Activated CD8-positive, alpha-beta memory T cell treated with anti-CD3 and anti-CD28 coated beads, Interleukin-2, amount 10 ng/mL, durations not matched to agents 7 days and 5 days (primary cell): ENCODE measurements at regions of chr10 and their contacts with region 1.

Region 1: GRCh38 chr10:119596537-119597404 is at the start of gene TIAL1:
- DNase-seq: peak; percentile 98
- ATAC-seq: peak; percentile 91
- H3K4me3 Mint-ChIP-seq: peak within 1 kb of the TSS; percentile 90
- H3K27ac Mint-ChIP-seq: peak within 1 kb of the TSS; percentile 96
- H3K4me1 Mint-ChIP-seq: peaks cover 40% of the 10 kb centered on the region
- H3K27me3 Mint-ChIP-seq: no peaks in the 10 kb centered on the region
- total RNA-seq, gene TIAL1: 181 to 191 TPM

Region 2: DNA sequence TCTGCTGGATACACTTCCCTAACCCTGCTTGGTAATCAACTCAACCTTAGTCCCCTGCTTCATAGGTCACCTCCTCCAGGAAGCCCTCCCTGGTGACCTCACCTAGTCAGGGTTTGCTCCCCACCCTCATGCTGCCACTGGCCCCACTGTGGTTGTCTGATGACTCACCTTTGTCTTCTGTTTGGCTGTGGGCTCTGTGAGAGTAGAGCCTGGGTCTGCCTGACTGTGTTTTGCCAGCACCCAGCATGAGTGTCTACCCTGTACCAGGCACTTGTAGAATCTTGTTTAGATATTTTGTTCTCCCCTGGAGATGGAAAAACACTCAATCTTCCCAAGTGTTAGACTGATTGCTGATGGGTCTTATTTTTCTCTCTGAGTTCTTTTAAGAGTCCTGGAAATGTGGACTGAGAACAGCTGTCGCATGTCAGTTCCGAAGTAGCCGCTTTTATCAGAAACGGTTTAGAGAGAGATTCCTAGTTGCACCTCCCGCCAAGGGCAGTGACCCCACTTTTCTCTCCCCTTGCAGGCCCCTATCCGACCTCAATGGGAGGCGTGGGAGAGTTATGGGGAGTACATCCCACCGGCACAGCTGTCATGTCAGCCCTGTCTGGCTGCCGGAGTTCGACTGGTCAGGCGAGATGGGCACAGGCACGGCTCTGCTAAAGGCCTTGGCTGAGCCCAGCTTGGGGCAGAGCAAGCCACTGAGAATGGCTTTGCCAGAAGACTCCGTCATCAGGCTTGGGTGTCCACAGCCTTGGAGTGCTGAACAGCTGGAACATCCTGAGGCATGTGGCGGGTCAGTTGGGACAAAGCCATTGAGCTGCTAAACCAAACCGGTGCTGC is 255.1 kb before region 1 on chr10:
- CTCF ChIA-PET with region 1: no interaction called
- DNase-seq: peak; percentile 81
- ATAC-seq: peak; percentile 94
- H3K4me3 Mint-ChIP-seq: no peak overlapping the region
- H3K27ac Mint-ChIP-seq: no peak overlapping the region
- H3K4me1 Mint-ChIP-seq: peaks cover 40% of the 10 kb centered on the region
- H3K27me3 Mint-ChIP-seq: no peaks in the 10 kb centered on the region

Region 3: GRCh38 chr10:119575991-119576390 is 20.8 kb before region 1 on chr10:
- CTCF ChIA-PET with region 1: interaction called, 12 read pairs
- DNase-seq: no peak
- ATAC-seq: peak; percentile 57
- H3K4me3 Mint-ChIP-seq: no peak overlapping the region
- H3K27ac Mint-ChIP-seq: peak overlapping the region; percentile 65
- H3K4me1 Mint-ChIP-seq: peaks cover 26% of the 10 kb centered on the region
- H3K27me3 Mint-ChIP-seq: no peaks in the 10 kb centered on the region

Region 4: GRCh38 chr10:119670717-119671116 is 73.9 kb after region 1 on chr10:
- CTCF ChIA-PET with region 1: no interaction called
- DNase-seq: no peak
- ATAC-seq: no peak
- H3K4me3 Mint-ChIP-seq: no peak overlapping the region
- H3K27ac Mint-ChIP-seq: no peak overlapping the region
- H3K4me1 Mint-ChIP-seq: peaks cover 3% of the 10 kb centered on the region
- H3K27me3 Mint-ChIP-seq: no peaks in the 10 kb centered on the region

Region 5: DNA sequence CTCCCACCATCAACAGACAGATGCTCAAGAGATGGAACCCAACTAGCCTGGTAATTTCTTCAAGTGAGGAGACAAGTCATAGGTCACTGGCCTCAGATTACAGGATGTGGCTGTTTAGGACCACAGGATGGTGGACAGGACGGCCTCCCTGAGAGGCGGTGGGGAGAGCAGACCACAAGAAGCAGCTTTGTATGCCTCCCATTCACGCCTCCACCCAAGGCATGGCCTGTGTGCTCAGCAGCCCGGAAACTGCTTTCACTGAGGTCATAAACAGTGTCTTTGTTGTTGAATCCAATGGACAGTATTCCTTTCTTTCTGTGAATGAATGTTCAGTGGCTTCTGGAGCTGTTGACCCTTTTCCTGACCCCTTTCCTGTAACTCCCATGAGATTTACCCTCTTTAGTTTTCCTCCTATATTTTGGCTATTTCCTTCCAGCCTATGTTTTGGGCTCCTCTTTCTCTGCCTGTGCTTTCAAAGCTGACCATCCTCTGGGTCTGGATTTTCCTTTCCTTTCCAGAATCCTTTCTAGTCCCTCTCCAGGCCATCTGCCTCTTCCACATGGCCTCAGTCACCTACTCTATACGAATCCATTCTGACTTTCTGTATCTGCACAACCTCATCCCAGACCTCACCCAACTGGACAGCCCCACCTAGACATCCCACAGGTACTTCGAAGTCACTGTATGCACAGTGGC is 96.6 kb after region 1 on chr10:
- CTCF ChIA-PET with region 1: no interaction called
- DNase-seq: peak; percentile 78
- ATAC-seq: peak; percentile 77
- H3K4me3 Mint-ChIP-seq: no peak overlapping the region
- H3K27ac Mint-ChIP-seq: peak overlapping the region; percentile 44
- H3K4me1 Mint-ChIP-seq: peaks cover 17% of the 10 kb centered on the region
- H3K27me3 Mint-ChIP-seq: peaks cover 4% of the 10 kb centered on the region

Region 6: GRCh38 chr10:119750391-119751230 is 153.8 kb after region 1 on chr10:
- CTCF ChIA-PET with region 1: no interaction called
- DNase-seq: peak; percentile 73
- ATAC-seq: peak; percentile 93
- H3K4me3 Mint-ChIP-seq: no peak overlapping the region
- H3K27ac Mint-ChIP-seq: no peak overlapping the region
- H3K4me1 Mint-ChIP-seq: peaks cover 4% of the 10 kb centered on the region
- H3K27me3 Mint-ChIP-seq: no peaks in the 10 kb centered on the region